Caki2 (cell line): ENCODE measurements at regions of chr15 and their contacts with region 1.

Region 1: DNA sequence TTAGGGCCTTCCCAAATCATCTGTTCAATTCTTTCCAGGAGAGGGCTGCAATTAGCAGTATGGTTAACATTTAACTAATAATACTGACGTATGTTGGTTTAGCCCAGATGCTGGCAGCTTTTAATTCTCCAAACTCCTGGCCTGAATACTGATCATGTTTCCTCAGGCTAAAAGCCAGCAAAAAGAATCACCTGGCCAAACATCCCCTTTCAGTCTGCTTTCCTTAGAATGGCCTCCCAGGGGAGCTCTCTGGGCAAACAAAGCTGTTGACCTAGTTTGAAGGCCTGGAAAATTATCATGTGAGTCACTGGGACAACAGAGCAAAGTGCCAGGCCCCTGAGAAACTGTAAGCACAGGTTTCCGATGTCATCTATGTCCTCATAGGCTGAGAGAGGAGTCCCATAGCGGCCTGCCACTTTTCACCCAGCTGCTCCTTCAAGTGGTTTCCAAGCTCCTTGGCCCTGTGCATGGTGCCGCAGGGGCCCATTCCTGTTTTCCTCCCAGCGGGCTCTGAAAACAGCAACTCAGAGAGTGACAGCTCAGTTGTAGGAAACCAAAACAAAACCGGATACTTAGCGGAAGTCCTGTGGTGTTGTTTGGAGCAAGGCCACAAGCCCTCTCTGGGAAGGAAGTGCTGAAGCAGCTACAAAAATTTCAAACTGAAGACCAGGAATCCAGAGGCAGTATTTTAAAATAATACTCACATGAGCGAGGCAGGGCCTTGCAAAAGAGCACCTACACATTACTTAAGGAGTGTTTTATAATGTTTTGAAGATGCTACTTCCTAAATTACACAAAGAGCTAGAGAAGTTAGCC is 36.5 kb upstream of the RAB11A start:
- DNase-seq: peak; percentile 99

Region 2: DNA sequence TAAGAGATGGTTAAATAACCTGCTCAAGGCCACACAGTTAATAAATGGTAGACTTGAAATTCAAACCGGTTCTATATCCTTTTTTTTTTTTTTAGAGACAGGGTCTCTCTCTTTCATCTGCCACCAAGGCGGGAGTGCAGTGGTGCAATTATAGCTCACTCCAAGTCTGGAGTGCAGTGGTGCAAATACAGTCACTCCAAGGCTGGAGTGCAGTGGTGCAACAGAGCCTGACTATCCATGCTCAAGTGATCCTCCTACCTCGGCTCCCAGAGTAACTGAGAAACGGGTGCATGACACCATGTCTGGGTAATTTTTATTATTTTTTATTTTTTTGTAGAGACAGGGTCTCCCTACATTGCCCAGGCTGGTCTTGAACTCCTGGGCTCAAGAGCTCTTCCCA is 338.7 kb before region 1 on chr15:
- in situ Hi-C with region 1: no loop called
- DNase-seq: no peak

Region 3: GRCh38 chr15:65638681-65639089 is 194.1 kb before region 1 on chr15:
- in situ Hi-C with region 1: loop called (anchors 25 kb)
- DNase-seq: peak; percentile 68